Naive thymus-derived CD4-positive, alpha-beta T cell (primary cell): ENCODE measurements at regions of chr6 and their contacts with region 1.

Region 1: GRCh38 chr6:1609648-1610496 is at the start of gene FOXC1:
- DNase-seq: peak in 1 of 9 donors; percentile 61
- ATAC-seq: peak; percentile 54
- H3K4me3 ChIP-seq: peak within 1 kb of the TSS; percentile 26
- H3K4me3 Mint-ChIP-seq: peak within 1 kb of the TSS; percentile 75 to 88 (median 82)
- H3K27ac ChIP-seq: no peak within 1 kb of the TSS
- H3K27ac Mint-ChIP-seq: peak within 1 kb of the TSS in 1 of 9 donors; percentile 84
- H3K4me1 ChIP-seq: peaks cover 22 to 27% of the 10 kb centered on the region in 2 donors
- H3K4me1 Mint-ChIP-seq: peaks cover 35 to 65% (median 55%) of the 10 kb centered on the region in 7 donors
- H3K27me3 ChIP-seq: peaks cover 20 to 36% of the 10 kb centered on the region in 2 donors
- H3K27me3 Mint-ChIP-seq: peaks cover 55 to 67% (median 65%) of the 10 kb centered on the region in 5 donors
- total RNA-seq, gene FOXC1: not detected

Region 2: DNA sequence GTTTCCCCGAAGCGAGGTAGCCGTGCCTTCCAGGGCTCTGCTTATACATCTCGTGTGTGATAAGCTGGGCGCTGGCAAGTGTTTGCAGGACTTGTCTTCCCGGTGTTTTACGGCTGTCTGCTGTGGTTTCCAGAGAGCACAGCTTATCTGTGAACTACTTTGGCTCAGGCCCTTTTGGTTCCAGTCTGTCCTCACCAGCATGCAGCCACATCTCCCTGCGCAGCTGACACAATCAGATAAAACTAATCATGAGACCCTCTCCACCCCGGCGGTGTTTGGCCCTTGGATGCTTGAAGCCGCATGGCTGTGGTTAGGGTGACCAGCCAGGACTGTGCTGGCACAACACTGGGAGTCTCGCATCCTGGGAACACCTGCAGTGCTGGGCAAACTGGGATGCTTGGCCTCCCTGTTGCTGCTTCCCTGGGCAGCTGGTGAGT is 539.8 kb before region 1 on chr6:
- CTCF ChIA-PET with region 1: no interaction called
- POLR2A ChIA-PET with region 1: no interaction called
- intact Hi-C with region 1: no loop called
- DNase-seq: no peak
- ATAC-seq: no peak
- H3K4me3 ChIP-seq: no peak overlapping the region
- H3K4me3 Mint-ChIP-seq: no peak overlapping the region
- H3K27ac ChIP-seq: no peak overlapping the region
- H3K27ac Mint-ChIP-seq: no peak overlapping the region
- H3K4me1 ChIP-seq: no peaks in the 10 kb centered on the region
- H3K4me1 Mint-ChIP-seq: peaks cover 0 to 6% (median 0%) of the 10 kb centered on the region in 7 donors
- H3K27me3 ChIP-seq: no peaks in the 10 kb centered on the region
- H3K27me3 Mint-ChIP-seq: peaks cover 6 to 25% (median 17%) of the 10 kb centered on the region in 5 donors

Region 3: GRCh38 chr6:1311400-1312202 is 298.3 kb before region 1 on chr6 and contains the start of gene FOXQ1:
- CTCF ChIA-PET with region 1: no interaction called
- POLR2A ChIA-PET with region 1: no interaction called
- intact Hi-C with region 1: loop called in 1 of 2 experiments (anchors 5 kb)
- DNase-seq: peak in 1 of 9 donors; percentile 28
- ATAC-seq: peak; percentile 16
- H3K4me3 ChIP-seq: no peak within 1 kb of the TSS
- H3K4me3 Mint-ChIP-seq: peak within 1 kb of the TSS; percentile 25 to 84 (median 73)
- H3K27ac ChIP-seq: no peak within 1 kb of the TSS
- H3K27ac Mint-ChIP-seq: peak within 1 kb of the TSS in 1 of 9 donors; percentile 78
- H3K4me1 ChIP-seq: no peaks in the 10 kb centered on the region
- H3K4me1 Mint-ChIP-seq: peaks cover 21 to 40% (median 32%) of the 10 kb centered on the region in 7 donors
- H3K27me3 ChIP-seq: peaks cover 7 to 8% of the 10 kb centered on the region in 2 donors
- H3K27me3 Mint-ChIP-seq: peaks cover 65 to 79% (median 72%) of the 10 kb centered on the region in 5 donors
- total RNA-seq, gene FOXQ1: not detected